Psoas muscle (tissue), 8 donors: ENCODE measurements at regions of chr17 and their contacts with region 1.

Region 1: GRCh38 chr17:49997791-49998703 is 3.0 kb upstream of the DLX3 start:
- DNase-seq: peak; percentile 70 to 79
- ATAC-seq: peak; percentile 81 to 87 (median 83)
- H3K4me3 ChIP-seq: no peak overlapping the region
- H3K27ac ChIP-seq: no peak overlapping the region
- H3K4me1 ChIP-seq: peaks cover 19% of the 10 kb centered on the region
- H3K27me3 ChIP-seq: peaks cover 0 to 89% (median 25%) of the 10 kb centered on the region in 3 donors
- CTCF ChIP-seq: peak; percentile 97

Region 2: DNA sequence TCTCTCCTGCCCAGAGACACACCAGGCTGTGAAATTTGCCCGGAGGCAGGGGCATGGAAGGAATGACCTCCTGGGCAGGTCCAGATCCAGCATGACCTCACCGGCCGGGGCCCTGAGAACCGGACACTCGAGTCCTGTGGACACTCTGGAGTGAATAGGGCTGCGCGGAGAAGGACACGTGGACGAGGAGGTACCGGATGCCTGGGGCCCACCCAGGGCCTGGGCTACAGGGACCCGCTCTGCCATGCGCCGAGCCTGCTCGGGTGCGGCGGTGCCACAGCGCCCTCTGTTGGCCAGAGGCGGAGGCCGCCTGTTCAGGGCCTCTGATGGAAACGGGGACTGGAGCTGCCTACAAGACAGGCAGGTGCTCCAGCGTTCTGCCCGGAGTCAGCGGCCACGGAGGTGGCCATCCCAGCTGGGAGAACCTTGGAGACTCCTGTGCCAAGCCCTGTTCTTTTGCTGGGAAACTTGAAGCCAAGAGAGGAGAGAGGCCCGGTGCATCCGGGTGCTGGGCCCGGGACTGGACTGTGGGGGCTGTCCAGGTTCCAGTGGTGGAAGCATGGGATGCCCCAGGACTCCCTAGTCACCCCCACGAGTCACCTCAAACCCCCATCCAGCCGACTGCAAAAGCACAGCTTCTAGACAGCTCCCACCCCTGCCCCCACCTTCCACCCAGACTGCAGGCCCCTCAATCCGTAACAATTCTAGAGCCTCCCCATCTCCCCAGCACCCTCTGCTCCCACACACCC is 441.6 kb before region 1 on chr17:
- intact Hi-C with region 1: loop called in 1 of 2 experiments (anchors 5 kb)
- DNase-seq: peak; percentile 77 to 89
- ATAC-seq: peak; percentile 87 to 95 (median 91)
- H3K4me3 ChIP-seq: peak overlapping the region; percentile 11
- H3K27ac ChIP-seq: no peak overlapping the region
- H3K4me1 ChIP-seq: no peaks in the 10 kb centered on the region
- H3K27me3 ChIP-seq: no peaks in the 10 kb centered on the region
- CTCF ChIP-seq: peak; percentile 97

Region 3: GRCh38 chr17:49694847-49695683 is 303.0 kb before region 1 on chr17:
- intact Hi-C with region 1: loop called in 1 of 2 experiments (anchors 10 kb)
- DNase-seq: peak; percentile 48 to 64
- ATAC-seq: peak; percentile 42 to 48 (median 45)
- H3K4me3 ChIP-seq: no peak overlapping the region
- H3K27ac ChIP-seq: no peak overlapping the region
- H3K4me1 ChIP-seq: peaks cover 8% of the 10 kb centered on the region
- H3K27me3 ChIP-seq: no peaks in the 10 kb centered on the region
- CTCF ChIP-seq: peak; percentile 89

Region 4: GRCh38 chr17:49779739-49780231 is 218.3 kb before region 1 on chr17:
- intact Hi-C with region 1: loop called in 1 of 2 experiments (anchors 5 kb)
- DNase-seq: no peak
- ATAC-seq: peak; percentile 59 to 79 (median 72)
- H3K4me3 ChIP-seq: no peak overlapping the region
- H3K27ac ChIP-seq: no peak overlapping the region
- H3K4me1 ChIP-seq: peaks cover 15% of the 10 kb centered on the region
- H3K27me3 ChIP-seq: no peaks in the 10 kb centered on the region
- CTCF ChIP-seq: peak; percentile 48

Region 5: GRCh38 chr17:49880291-49881053 is 117.6 kb before region 1 on chr17:
- intact Hi-C with region 1: loop called (anchors 2 to 5 kb)
- DNase-seq: peak; percentile 71 to 86
- ATAC-seq: peak; percentile 91 to 98 (median 96)
- H3K4me3 ChIP-seq: no peak overlapping the region
- H3K27ac ChIP-seq: no peak overlapping the region
- H3K4me1 ChIP-seq: peaks cover 7% of the 10 kb centered on the region
- H3K27me3 ChIP-seq: peaks cover 0 to 35% (median 5%) of the 10 kb centered on the region in 3 donors
- CTCF ChIP-seq: peak; percentile 96

Region 6: GRCh38 chr17:50425682-50426471 is 427.8 kb after region 1 on chr17 and contains the start of gene ACSF2:
- intact Hi-C with region 1: no loop called
- DNase-seq: peak; percentile 82 to 88
- ATAC-seq: peak; percentile 64 to 85 (median 78)
- H3K4me3 ChIP-seq: peak within 1 kb of the TSS; percentile 86
- H3K27ac ChIP-seq: peak within 1 kb of the TSS; percentile 83
- H3K4me1 ChIP-seq: peaks cover 38% of the 10 kb centered on the region
- H3K27me3 ChIP-seq: no peaks in the 10 kb centered on the region
- CTCF ChIP-seq: no peak
- total RNA-seq, gene ACSF2: 14.4 to 72.3 (median 44.7) TPM